Dendritic cell treated with granulocyte-macrophage colony-stimulating factor and Interleukin-4, amounts not matched to agents 40 ng/mL and 50 ng/mL, for 4 days (primary cell): ENCODE measurements at regions of chr6 and their contacts with region 1.

Region 1: DNA sequence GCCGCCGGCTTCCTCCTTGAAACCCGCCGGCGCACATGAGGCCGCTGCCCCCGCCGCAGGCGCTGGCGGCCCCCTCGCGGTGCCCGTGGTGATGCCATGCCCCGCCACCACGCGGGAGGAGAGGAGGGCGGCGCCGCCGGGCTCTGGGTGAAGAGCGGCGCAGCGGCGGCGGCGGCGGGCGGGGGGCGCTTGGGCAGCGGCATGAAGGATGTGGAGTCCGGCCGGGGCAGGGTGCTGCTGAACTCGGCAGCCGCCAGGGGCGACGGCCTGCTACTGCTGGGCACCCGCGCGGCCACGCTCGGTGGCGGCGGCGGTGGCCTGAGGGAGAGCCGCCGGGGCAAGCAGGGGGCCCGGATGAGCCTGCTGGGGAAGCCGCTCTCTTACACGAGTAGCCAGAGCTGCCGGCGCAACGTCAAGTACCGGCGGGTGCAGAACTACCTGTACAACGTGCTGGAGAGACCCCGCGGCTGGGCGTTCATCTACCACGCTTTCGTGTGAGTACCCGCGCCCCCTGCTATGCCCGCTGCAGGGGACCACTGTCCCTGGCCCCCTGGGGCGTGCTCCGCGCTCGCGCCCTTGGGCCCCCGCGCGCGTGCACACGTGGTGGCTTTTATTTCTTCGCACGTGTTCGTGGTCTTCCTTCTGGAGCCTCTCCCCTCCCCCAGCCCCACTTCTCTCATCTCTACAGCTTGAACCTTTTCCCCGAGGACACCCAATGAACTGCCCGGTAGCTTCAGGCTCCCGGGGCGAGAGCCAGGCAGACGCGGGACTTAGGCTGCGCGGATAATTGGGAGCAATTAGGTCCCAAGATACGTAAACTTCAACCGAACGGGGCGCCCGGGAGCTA is 453 bp downstream of the KCNQ5 start:
- H3K4me3 Mint-ChIP-seq: peak overlapping the region; percentile 81
- H3K27ac Mint-ChIP-seq: no peak overlapping the region
- H3K4me1 Mint-ChIP-seq: peaks cover 33% of the 10 kb centered on the region
- H3K27me3 Mint-ChIP-seq: peaks cover 32% of the 10 kb centered on the region

Region 2: GRCh38 chr6:72286911-72287311 is 335.4 kb before region 1 on chr6:
- intact Hi-C with region 1: no loop called
- H3K4me3 Mint-ChIP-seq: no peak overlapping the region
- H3K27ac Mint-ChIP-seq: no peak overlapping the region
- H3K4me1 Mint-ChIP-seq: no peaks in the 10 kb centered on the region
- H3K27me3 Mint-ChIP-seq: no peaks in the 10 kb centered on the region

Region 3: DNA sequence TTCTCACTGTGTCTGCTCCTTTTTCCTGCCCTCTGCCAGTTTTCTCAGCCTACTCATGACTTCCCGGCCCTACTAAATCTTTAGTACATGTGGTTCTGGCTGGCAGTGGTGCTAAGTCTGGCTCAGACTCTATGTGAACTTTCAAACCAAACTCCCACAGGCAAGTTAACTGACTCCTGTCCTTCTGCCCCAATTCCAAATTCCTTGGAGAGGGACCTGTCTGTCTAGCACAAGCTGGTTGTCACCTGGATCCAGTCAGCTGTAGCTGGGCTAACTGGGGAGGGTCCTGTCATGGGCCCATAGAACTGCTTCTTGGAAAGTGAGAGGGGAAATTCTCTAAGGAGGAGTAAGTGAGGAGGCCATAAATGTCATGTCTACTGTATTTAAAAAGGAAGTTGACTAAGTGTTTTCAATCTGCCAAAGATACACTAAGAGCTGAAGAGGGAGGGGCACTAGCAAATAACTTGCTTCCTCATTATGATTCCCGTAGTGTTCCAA is 239.7 kb after region 1 on chr6:
- intact Hi-C with region 1: loop called (anchors 5 kb)
- H3K4me3 Mint-ChIP-seq: no peak overlapping the region
- H3K27ac Mint-ChIP-seq: peak overlapping the region; percentile 96
- H3K4me1 Mint-ChIP-seq: peaks cover 32% of the 10 kb centered on the region
- H3K27me3 Mint-ChIP-seq: no peaks in the 10 kb centered on the region

Region 4: DNA sequence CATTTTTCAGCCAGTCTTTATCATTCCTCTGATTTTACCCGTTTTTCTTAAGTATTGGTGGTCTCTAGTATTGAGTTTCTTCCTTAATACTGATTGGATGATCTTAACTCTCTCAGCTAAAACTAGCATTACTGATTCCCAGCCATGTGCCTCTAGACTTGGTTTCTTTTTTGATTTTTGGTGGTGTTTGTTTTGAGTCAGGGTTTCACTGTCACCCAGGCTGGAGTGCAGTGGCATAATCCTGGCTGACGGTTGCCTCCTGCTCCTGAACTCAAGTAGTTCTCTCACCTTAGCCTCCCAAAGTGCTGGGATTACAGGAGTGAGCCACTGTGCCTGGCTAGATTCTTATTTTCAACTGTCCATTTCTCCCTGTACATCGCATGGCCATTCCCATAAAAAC is 706.9 kb after region 1 on chr6:
- intact Hi-C with region 1: loop called (anchors 10 kb)
- H3K4me3 Mint-ChIP-seq: no peak overlapping the region
- H3K27ac Mint-ChIP-seq: no peak overlapping the region
- H3K4me1 Mint-ChIP-seq: no peaks in the 10 kb centered on the region
- H3K27me3 Mint-ChIP-seq: peaks cover 12% of the 10 kb centered on the region